B cell (primary cell): ENCODE measurements at regions of chr16 and their contacts with region 1.

Region 1: DNA sequence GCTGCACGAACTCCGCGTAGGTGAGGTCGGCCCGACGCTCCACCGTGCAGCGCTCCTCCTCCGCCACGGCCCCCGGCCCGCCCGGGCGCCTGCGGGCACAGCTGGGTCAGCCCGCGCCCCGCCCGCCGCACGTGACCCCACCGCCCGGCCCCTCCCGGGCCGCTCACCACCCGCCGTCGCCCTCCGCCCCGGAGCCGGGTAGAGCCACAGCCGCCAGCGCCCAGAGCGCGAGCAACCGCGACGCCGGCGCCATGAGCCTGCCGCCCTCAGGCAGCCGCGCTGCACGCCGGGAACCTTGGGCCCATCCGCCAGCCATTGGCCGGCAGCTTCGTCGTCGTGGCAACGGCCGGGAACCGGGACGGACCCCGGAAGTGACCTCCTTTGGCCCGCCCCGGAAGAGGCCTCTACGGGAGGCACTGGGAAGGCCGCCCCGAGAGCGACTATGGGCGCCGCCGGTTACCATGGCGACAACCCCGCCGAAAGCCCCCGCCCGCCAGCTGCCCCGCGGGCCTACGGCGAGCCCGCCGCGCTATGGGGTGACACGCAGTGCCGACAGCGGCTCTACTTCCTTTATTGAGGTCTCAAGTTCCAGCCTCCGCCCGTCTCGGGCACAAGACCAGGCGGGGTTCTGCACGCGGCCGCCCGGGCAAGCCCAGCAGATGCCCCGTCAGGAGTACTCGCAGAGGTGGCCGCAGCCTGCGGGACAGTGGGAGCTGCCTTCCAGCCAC is at the start of gene JMJD8:
- DNase-seq: peak; percentile 98
- ATAC-seq: peak; percentile 48
- H3K4me3 ChIP-seq: peak within 1 kb of the TSS in 4 of 5 experiments; percentile 57 to 72 (median 63)
- H3K4me3 Mint-ChIP-seq: peak within 1 kb of the TSS; percentile 86
- H3K27ac ChIP-seq: peak within 1 kb of the TSS; percentile 64 to 89
- H3K27ac Mint-ChIP-seq: peak within 1 kb of the TSS; percentile 91
- H3K4me1 ChIP-seq: peaks cover 31 to 48% of the 10 kb centered on the region in 2 donors
- H3K4me1 Mint-ChIP-seq: peaks cover 32% of the 10 kb centered on the region
- H3K27me3 ChIP-seq: no peaks in the 10 kb centered on the region
- H3K27me3 Mint-ChIP-seq: no peaks in the 10 kb centered on the region
- CTCF ChIP-seq: no peak
- total RNA-seq, gene JMJD8: 41.3 and 46.3 TPM in 2 replicates

Region 2: GRCh38 chr16:636206-637080 is 47.8 kb before region 1 on chr16 and contains the start of gene METTL26:
- CTCF ChIA-PET with region 1: interaction called, 3 read pairs
- POLR2A ChIA-PET with region 1: no interaction called
- intact Hi-C with region 1: loop called (anchors 1 kb)
- DNase-seq: peak; percentile 96
- ATAC-seq: peak; percentile 81
- H3K4me3 ChIP-seq: peak within 1 kb of the TSS; percentile 84 to 95 (median 87)
- H3K4me3 Mint-ChIP-seq: peak within 1 kb of the TSS; percentile 98
- H3K27ac ChIP-seq: peak within 1 kb of the TSS; percentile 82 to 83
- H3K27ac Mint-ChIP-seq: peak within 1 kb of the TSS; percentile 98
- H3K4me1 ChIP-seq: peaks cover 14 to 43% of the 10 kb centered on the region in 2 donors
- H3K4me1 Mint-ChIP-seq: peaks cover 23% of the 10 kb centered on the region
- H3K27me3 ChIP-seq: no peaks in the 10 kb centered on the region
- H3K27me3 Mint-ChIP-seq: no peaks in the 10 kb centered on the region
- CTCF ChIP-seq: no peak
- total RNA-seq, gene METTL26: 47.2 and 56.6 TPM in 2 replicates

Region 3: GRCh38 chr16:648781-649589 is 35.2 kb before region 1 on chr16 and contains the start of gene WDR90:
- CTCF ChIA-PET with region 1: no interaction called
- POLR2A ChIA-PET with region 1: no interaction called
- intact Hi-C with region 1: loop called (anchors 1 kb)
- DNase-seq: peak; percentile 94
- ATAC-seq: peak; percentile 87
- H3K4me3 ChIP-seq: peak within 1 kb of the TSS; percentile 27 to 76 (median 67)
- H3K4me3 Mint-ChIP-seq: peak within 1 kb of the TSS; percentile 84
- H3K27ac ChIP-seq: peak within 1 kb of the TSS; percentile 79 to 90
- H3K27ac Mint-ChIP-seq: peak within 1 kb of the TSS; percentile 86
- H3K4me1 ChIP-seq: peaks cover 15 to 20% of the 10 kb centered on the region in 2 donors
- H3K4me1 Mint-ChIP-seq: peaks cover 19% of the 10 kb centered on the region
- H3K27me3 ChIP-seq: no peaks in the 10 kb centered on the region
- H3K27me3 Mint-ChIP-seq: no peaks in the 10 kb centered on the region
- CTCF ChIP-seq: no peak
- total RNA-seq, gene WDR90: 34.7 and 45.0 TPM in 2 replicates

Region 4: GRCh38 chr16:667780-668518 is 16.3 kb before region 1 on chr16 and contains the start of gene RHOT2:
- CTCF ChIA-PET with region 1: interaction called, 7 read pairs
- POLR2A ChIA-PET with region 1: interaction called, 4 read pairs
- intact Hi-C with region 1: loop called (anchors 1 kb)
- DNase-seq: peak; percentile 95
- ATAC-seq: peak; percentile 99
- H3K4me3 ChIP-seq: peak within 1 kb of the TSS; percentile 23 to 84 (median 73)
- H3K4me3 Mint-ChIP-seq: peak within 1 kb of the TSS; percentile 86
- H3K27ac ChIP-seq: peak within 1 kb of the TSS; percentile 41 to 79
- H3K27ac Mint-ChIP-seq: peak within 1 kb of the TSS; percentile 92
- H3K4me1 ChIP-seq: peaks cover 15 to 25% of the 10 kb centered on the region in 2 donors
- H3K4me1 Mint-ChIP-seq: peaks cover 12% of the 10 kb centered on the region
- H3K27me3 ChIP-seq: no peaks in the 10 kb centered on the region
- H3K27me3 Mint-ChIP-seq: no peaks in the 10 kb centered on the region
- CTCF ChIP-seq: peak; percentile 79
- total RNA-seq, gene RHOT2: 207 and 215 TPM in 2 replicates

Region 5: DNA sequence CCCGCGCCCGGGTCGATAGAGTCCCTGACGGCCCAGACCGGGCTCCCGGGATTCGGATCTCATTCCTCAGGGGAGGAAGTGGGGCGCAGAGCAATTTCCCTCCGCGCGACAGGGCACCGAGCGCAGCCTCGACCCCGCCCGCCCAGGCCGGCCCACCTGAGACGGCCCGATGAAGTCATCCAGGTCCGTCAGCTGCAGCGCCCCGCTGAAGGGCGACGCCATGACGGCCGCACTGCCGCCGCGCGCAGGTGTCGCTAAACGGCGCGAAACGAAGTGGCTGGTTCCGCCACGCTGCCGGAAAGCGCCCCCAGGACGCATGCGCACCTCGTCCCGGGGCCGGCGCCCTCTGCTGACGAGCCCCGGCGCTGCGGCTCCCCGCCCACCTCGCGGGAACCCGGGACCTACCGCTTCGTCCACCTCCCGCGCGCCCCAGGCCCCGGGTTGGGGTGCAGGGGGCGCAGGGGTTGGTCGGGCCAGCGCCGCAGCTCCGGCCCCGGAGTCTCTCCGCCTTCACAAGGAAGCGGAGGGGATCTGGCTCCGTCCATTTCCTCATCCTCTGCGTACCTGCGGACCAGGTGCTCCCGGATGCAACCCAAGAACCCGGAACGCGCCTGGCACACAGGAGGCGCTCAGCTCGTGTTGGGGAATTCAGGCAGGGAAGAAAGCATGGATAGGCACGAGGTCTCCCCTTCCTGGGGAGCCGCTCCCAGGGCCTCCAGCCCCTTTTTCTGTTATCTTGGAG is 56.7 kb after region 1 on chr16 and contains the start of gene CIAO3:
- CTCF ChIA-PET with region 1: no interaction called
- POLR2A ChIA-PET with region 1: no interaction called
- intact Hi-C with region 1: loop called (anchors 2 kb)
- DNase-seq: peak; percentile 95
- ATAC-seq: peak; percentile 88
- H3K4me3 ChIP-seq: peak within 1 kb of the TSS; percentile 21 to 94 (median 81)
- H3K4me3 Mint-ChIP-seq: peak within 1 kb of the TSS; percentile 82
- H3K27ac ChIP-seq: peak within 1 kb of the TSS; percentile 86 to 94
- H3K27ac Mint-ChIP-seq: peak within 1 kb of the TSS; percentile 83
- H3K4me1 ChIP-seq: peaks cover 20 to 36% of the 10 kb centered on the region in 2 donors
- H3K4me1 Mint-ChIP-seq: peaks cover 18% of the 10 kb centered on the region
- H3K27me3 ChIP-seq: no peaks in the 10 kb centered on the region
- H3K27me3 Mint-ChIP-seq: no peaks in the 10 kb centered on the region
- CTCF ChIP-seq: peak; percentile 97
- total RNA-seq, gene CIAO3: 59.4 and 67.6 TPM in 2 replicates